Activated CD4-positive, alpha-beta T cell treated with anti-CD3 and anti-CD28 coated beads for 36 hours (primary cell): ENCODE measurements at regions of chr6 and their contacts with region 1.

Region 1: DNA sequence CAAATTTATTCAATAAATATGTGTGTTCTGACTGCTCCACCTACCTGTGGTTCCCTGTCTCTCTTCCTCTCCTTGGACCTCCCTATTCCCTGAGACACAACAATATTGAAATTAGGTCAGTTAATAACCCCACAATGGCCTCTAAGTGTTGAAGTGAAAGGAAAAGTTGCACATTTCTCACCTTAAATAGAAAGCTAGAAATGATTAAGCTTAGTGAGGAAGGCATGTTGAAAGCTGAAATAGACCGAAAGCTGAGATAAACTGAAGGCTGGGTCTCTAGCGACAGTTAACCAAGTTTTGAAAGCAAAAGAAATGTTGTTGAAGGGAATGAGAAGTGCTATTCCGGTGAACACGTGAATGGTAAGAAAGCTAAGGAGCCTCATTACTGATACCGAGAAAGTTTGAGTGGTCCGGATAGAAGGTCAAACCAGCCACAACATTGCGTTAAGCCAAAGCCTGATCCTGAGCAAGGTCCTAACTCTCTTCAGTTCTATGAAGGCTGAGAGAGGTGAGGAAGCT is 34.1 kb downstream of the UST start:
- DNase-seq: peak; percentile 16
- ATAC-seq: peak; percentile 94
- H3K4me3 Mint-ChIP-seq: peak overlapping the region; percentile 26
- H3K27ac Mint-ChIP-seq: peak overlapping the region; percentile 26
- H3K4me1 Mint-ChIP-seq: peaks cover 25% of the 10 kb centered on the region
- H3K27me3 Mint-ChIP-seq: peaks cover 3% of the 10 kb centered on the region

Region 2: DNA sequence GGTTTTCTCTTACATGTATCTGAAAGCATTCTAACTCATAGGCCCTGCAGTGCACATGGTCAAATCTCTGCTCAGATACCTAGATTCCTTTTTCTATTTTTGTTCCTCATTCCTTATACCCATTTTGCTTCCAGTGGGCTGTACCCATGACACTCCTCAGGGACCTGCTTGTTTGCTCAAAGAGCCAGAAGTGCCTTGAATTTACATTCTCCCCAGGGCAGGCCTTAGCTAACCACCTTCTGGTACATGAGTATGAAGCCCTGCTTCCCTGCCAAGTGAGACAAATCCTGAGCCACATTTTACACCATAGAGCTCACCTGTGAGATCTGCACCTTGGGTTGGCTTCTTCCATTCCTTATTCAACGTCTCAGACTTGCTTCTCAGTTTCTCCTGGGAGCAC is 765.0 kb before region 1 on chr6:
- CTCF ChIA-PET with region 1: no interaction called
- POLR2A ChIA-PET with region 1: no interaction called
- intact Hi-C with region 1: no loop called
- DNase-seq: no peak
- ATAC-seq: no peak
- H3K4me3 Mint-ChIP-seq: no peak overlapping the region
- H3K27ac Mint-ChIP-seq: no peak overlapping the region
- H3K4me1 Mint-ChIP-seq: no peaks in the 10 kb centered on the region
- H3K27me3 Mint-ChIP-seq: no peaks in the 10 kb centered on the region

Region 3: GRCh38 chr6:148746363-148747144 is 34.4 kb before region 1 on chr6 and contains the start of gene UST:
- CTCF ChIA-PET with region 1: interaction called, 5 read pairs
- POLR2A ChIA-PET with region 1: interaction called, 3 read pairs
- intact Hi-C with region 1: loop called (anchors 1 to 5 kb)
- DNase-seq: peak; percentile 79
- ATAC-seq: peak; percentile 59
- H3K4me3 Mint-ChIP-seq: peak within 1 kb of the TSS; percentile 87
- H3K27ac Mint-ChIP-seq: peak within 1 kb of the TSS; percentile 69
- H3K4me1 Mint-ChIP-seq: peaks cover 23% of the 10 kb centered on the region
- H3K27me3 Mint-ChIP-seq: peaks cover 40% of the 10 kb centered on the region
- total RNA-seq, gene UST: 2.2 to 2.8 TPM

Region 4: DNA sequence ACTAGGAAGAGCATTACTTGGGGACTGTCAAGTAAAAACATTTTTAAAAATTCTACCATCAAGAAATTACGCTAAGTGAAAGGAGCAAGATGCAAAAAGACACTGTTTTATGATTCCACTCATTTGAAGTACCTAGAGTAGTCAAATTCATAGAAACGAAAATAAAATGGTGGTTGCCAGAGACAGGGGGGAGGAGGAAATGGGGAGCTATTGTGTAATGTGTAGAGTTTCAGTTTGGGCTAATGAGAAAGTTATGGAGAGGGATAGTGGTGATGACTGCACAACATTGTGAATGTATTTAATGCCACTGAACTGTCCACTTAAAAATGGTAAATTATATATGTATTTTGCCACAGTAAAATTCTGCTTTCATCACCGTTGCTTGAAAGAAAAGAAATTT is 49.6 kb after region 1 on chr6:
- CTCF ChIA-PET with region 1: interaction called, 4 read pairs
- POLR2A ChIA-PET with region 1: no interaction called
- intact Hi-C with region 1: loop called (anchors 1 kb)
- DNase-seq: no peak
- ATAC-seq: peak; percentile 75
- H3K4me3 Mint-ChIP-seq: peak overlapping the region; percentile 65
- H3K27ac Mint-ChIP-seq: peak overlapping the region; percentile 49
- H3K4me1 Mint-ChIP-seq: peaks cover 39% of the 10 kb centered on the region
- H3K27me3 Mint-ChIP-seq: peaks cover 11% of the 10 kb centered on the region

Region 5: DNA sequence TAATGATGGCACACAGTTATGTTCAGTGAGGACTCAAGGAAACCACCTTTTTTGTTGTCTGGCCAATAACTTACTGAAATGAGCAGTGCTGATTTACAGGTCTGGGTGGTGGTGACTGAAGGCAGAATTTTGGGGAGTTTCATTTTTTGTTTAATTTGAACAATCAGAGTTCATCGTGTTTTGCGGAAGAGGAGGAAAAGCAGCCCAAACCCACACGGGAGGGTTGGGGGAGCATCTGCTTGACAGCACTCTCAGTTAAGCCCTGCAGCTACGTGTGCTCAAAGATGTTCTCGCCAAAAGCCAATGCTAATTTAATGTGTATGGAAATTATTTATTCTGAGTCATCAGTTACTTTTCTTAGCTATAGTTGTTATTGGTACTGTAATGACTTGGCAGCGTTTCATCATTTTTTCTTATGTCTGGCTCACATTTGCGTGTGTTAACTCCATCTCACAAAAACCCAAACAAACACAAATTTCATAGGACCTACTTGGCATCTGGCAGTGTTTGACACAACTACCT is 55.0 kb after region 1 on chr6:
- CTCF ChIA-PET with region 1: interaction called, 4 read pairs
- POLR2A ChIA-PET with region 1: no interaction called
- intact Hi-C with region 1: loop called in 1 of 2 experiments (anchors 1 kb)
- DNase-seq: peak; percentile 69
- ATAC-seq: peak; percentile 80
- H3K4me3 Mint-ChIP-seq: peak overlapping the region; percentile 65
- H3K27ac Mint-ChIP-seq: peak overlapping the region; percentile 92
- H3K4me1 Mint-ChIP-seq: peaks cover 36% of the 10 kb centered on the region
- H3K27me3 Mint-ChIP-seq: peaks cover 5% of the 10 kb centered on the region